ENCODE measurements at regions of chr15 and their contacts with region 1.

Region 1: GRCh38 chr15:40160689-40161688 is at the start of gene BUB1B:
- DNase-seq: peak; percentile 83 to 95
- H3K4me3 ChIP-seq: peak within 1 kb of the TSS; percentile 85 to 97 (median 91)
- H3K27ac ChIP-seq: peak within 1 kb of the TSS; percentile 91
- H3K4me1 ChIP-seq: peaks cover 10 to 19% (median 14%) of the 10 kb centered on the region in 4 experiments
- H3K27me3 ChIP-seq: no peaks in the 10 kb centered on the region
- CTCF ChIP-seq: no peak
- EP300 ChIP-seq: no peak
- POLR2A ChIP-seq: peak; percentile 64 to 90
- RAD21 ChIP-seq: peak in 1 of 2 experiments; percentile 3; a peak in 2 of 4 replicates
- total RNA-seq, gene BUB1B: 144 and 153 TPM in 2 replicates

Region 2: DNA sequence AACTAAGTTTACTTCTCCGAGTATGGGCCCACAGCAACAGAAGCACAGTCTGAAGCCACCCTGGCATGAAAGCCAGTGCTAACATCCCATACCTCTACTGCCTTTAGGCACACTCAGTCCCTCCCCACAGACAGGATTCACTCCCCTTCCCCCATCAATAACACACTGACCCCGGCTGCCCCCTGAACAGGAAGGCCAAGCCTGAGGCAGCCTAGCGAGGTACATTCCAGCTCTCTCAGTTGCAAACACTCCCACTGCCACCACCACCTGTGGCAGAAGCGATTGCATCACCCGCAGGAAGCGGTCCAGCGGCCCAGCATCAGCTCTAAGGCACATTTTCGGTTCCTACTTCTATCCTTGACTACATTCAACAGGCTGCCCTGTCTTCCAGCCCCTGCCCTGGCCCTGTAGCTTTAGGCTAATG is 45.3 kb before region 1 on chr15:
- CTCF ChIA-PET with region 1: interaction called, 249 read pairs
- POLR2A ChIA-PET with region 1: interaction called, 19 read pairs
- DNase-seq: no peak
- H3K4me3 ChIP-seq: no peak overlapping the region
- H3K27ac ChIP-seq: no peak overlapping the region
- H3K4me1 ChIP-seq: peaks cover 5 to 19% (median 9%) of the 10 kb centered on the region in 4 experiments
- H3K27me3 ChIP-seq: no peaks in the 10 kb centered on the region
- CTCF ChIP-seq: no peak
- EP300 ChIP-seq: no peak
- POLR2A ChIP-seq: no peak
- RAD21 ChIP-seq: no peak

Region 3: GRCh38 chr15:40121911-40122638 is 38.9 kb before region 1 on chr15:
- CTCF ChIA-PET with region 1: interaction called, 4 read pairs
- POLR2A ChIA-PET with region 1: interaction called, 11 read pairs
- DNase-seq: peak in 1 of 2 experiments; percentile 37
- H3K4me3 ChIP-seq: no peak overlapping the region
- H3K27ac ChIP-seq: no peak overlapping the region
- H3K4me1 ChIP-seq: peaks cover 4 to 16% (median 12%) of the 10 kb centered on the region in 4 experiments; a peak in 5 of 7 replicates
- H3K27me3 ChIP-seq: no peaks in the 10 kb centered on the region
- CTCF ChIP-seq: no peak
- EP300 ChIP-seq: no peak
- POLR2A ChIP-seq: no peak
- RAD21 ChIP-seq: no peak

Region 4: GRCh38 chr15:40175160-40175559 is 14.2 kb after region 1 on chr15:
- CTCF ChIA-PET with region 1: interaction called, 9 read pairs
- POLR2A ChIA-PET with region 1: interaction called, 43 read pairs
- DNase-seq: no peak
- H3K4me3 ChIP-seq: no peak overlapping the region
- H3K27ac ChIP-seq: no peak overlapping the region
- H3K4me1 ChIP-seq: no peaks in the 10 kb centered on the region
- H3K27me3 ChIP-seq: no peaks in the 10 kb centered on the region
- CTCF ChIP-seq: no peak
- EP300 ChIP-seq: no peak
- POLR2A ChIP-seq: no peak
- RAD21 ChIP-seq: no peak

Region 5: DNA sequence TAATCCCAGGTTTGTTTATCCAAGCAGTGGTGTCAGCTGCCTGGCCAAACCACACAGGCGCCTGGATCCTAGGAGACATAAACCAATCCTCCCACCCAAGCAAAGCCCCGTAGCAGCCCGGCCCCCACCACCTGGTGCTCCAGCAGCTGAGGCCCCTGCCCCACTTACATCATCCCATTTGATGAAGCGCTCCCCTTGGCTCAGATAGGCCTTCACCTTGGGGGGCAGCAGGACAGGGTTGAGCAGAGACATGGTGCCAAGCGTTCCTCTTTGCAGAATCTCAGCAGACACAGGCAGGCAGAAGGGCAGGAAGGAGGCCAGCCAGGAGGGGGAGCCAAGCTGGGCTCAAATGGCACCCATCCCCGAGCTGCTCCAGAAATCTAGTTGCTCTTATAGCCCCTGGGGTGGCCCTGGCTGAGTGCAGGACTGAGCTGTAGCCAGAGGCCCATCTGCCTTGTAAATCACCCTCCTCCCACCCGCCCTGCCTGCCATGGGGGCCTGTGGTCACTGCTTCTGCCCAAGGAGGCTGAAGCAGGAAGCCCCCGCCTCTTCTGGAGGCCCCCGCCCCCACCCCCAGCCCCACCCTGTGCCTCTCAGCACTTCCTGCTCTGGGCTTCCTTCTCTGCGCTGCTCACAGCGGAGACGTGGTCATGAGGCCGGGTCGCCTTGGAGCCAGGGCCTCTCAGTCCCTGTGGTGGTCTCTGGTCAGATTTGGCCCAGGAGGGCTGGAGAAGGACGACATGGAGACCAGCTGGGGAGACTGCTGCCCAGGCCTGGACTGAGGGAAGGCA is 146.6 kb after region 1 on chr15 and contains the start of gene PLCB2:
- CTCF ChIA-PET with region 1: no interaction called
- POLR2A ChIA-PET with region 1: no interaction called
- DNase-seq: no peak
- H3K4me3 ChIP-seq: 0 out of 8 replicates have a peak within 1 kb of the TSS, but pooled peaks of 1 of the 4 experiments have one; percentile 19
- H3K27ac ChIP-seq: no peak within 1 kb of the TSS
- H3K4me1 ChIP-seq: peaks cover 0 to 29% (median 21%) of the 10 kb centered on the region in 4 experiments; a peak in 6 of 7 replicates
- H3K27me3 ChIP-seq: peaks cover 0 to 6% (median 0%) of the 10 kb centered on the region in 4 experiments; a peak in 3 of 7 replicates
- CTCF ChIP-seq: peak; percentile 30 to 60 (median 52); a peak in 3 of 4 replicates
- EP300 ChIP-seq: no peak
- POLR2A ChIP-seq: no peak
- RAD21 ChIP-seq: peak in 1 of 2 experiments; percentile 24; a peak in 1 of 4 replicates
- total RNA-seq, gene PLCB2: 8.4 and 9.4 TPM in 2 replicates